Endothelial cell of umbilical vein (primary cell): ENCODE measurements at regions of chr22 and their contacts with region 1.

Region 1: GRCh38 chr22:41800348-41801146 is at the start of gene CCDC134:
- DNase-seq: peak; percentile 84
- H3K4me3 ChIP-seq: peak within 1 kb of the TSS; percentile 62 to 83 (median 78)
- H3K27ac ChIP-seq: peak within 1 kb of the TSS; percentile 21
- H3K4me1 ChIP-seq: peaks cover 16% of the 10 kb centered on the region
- H3K27me3 ChIP-seq: no peaks in the 10 kb centered on the region
- CTCF ChIP-seq: no peak
- POLR2A ChIP-seq: peak; percentile 93
- total RNA-seq, gene CCDC134: 8.1 and 8.4 TPM in 2 replicates

Region 2: DNA sequence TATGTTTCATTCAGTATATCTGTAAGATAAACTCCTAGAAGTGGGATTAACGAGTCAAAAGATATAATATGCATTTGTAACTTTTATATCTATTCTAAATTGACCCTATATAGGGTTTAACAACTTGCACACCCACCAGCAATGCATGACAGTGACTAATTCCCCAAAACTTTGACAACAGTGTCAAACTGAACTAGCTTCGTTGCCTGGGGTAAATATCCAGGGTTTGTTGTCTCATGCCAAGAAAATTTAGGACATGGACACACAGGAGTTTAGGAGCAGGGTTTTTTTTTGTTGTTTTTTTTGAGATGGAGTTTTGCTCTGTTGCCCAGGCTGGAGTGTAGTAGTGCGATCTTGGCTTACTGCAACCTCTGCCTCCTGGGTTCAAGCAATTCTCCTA is 116.9 kb before region 1 on chr22:
- CTCF ChIA-PET with region 1: no interaction called
- POLR2A ChIA-PET with region 1: no interaction called
- dilution Hi-C with region 1: no loop called
- intact Hi-C with region 1: no loop called
- DNase-seq: no peak
- H3K4me3 ChIP-seq: no peak overlapping the region
- H3K27ac ChIP-seq: no peak overlapping the region
- H3K4me1 ChIP-seq: peaks cover 13% of the 10 kb centered on the region
- H3K27me3 ChIP-seq: no peaks in the 10 kb centered on the region
- CTCF ChIP-seq: no peak
- POLR2A ChIP-seq: no peak

Region 3: DNA sequence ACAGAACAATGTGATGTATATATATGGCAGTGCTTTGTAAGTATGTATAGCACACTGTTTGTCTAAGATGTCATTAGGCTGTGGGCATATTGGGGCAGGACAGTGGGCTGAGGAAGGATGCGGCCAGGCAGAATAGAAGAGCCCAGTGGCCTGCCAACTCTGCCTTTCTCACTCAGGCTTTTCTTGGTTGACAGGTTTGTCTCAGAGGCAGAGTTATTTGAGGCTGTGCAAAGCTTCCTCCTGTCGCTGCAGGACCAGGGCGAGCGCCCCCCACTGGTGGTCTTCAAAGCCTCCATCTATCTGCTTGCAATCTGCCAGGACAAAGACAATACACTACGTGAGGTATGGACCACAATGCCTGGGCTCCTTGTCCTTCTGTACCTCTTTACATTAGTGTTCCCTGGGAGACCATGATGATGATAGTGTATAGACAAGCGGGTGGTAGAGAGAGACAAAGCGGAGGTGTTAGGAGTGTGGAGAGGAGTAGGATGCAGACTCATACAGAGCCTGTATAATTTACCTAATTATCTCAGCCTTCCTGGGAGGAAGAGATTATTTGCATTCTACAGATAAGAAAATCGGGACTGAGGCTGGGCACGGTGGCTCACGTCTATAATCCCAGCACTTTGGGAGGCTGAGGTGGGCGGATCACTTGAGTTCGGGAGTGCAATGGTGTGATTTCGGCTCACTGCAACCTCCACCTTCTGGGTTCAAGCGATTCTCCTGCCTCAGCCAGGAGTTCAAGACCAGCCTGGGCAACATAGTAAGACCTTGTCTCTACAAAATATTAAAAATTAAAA is 37.4 kb before region 1 on chr22:
- CTCF ChIA-PET with region 1: interaction called, 12 read pairs
- POLR2A ChIA-PET with region 1: no interaction called
- dilution Hi-C with region 1: no loop called
- intact Hi-C with region 1: no loop called
- DNase-seq: peak; percentile 16
- H3K4me3 ChIP-seq: no peak overlapping the region
- H3K27ac ChIP-seq: no peak overlapping the region
- H3K4me1 ChIP-seq: peaks cover under 1% of the 10 kb centered on the region
- H3K27me3 ChIP-seq: peaks cover 0 to 3% of the 10 kb centered on the region in 2 experiments
- CTCF ChIP-seq: peak; percentile 31 to 49
- POLR2A ChIP-seq: no peak

Region 4: DNA sequence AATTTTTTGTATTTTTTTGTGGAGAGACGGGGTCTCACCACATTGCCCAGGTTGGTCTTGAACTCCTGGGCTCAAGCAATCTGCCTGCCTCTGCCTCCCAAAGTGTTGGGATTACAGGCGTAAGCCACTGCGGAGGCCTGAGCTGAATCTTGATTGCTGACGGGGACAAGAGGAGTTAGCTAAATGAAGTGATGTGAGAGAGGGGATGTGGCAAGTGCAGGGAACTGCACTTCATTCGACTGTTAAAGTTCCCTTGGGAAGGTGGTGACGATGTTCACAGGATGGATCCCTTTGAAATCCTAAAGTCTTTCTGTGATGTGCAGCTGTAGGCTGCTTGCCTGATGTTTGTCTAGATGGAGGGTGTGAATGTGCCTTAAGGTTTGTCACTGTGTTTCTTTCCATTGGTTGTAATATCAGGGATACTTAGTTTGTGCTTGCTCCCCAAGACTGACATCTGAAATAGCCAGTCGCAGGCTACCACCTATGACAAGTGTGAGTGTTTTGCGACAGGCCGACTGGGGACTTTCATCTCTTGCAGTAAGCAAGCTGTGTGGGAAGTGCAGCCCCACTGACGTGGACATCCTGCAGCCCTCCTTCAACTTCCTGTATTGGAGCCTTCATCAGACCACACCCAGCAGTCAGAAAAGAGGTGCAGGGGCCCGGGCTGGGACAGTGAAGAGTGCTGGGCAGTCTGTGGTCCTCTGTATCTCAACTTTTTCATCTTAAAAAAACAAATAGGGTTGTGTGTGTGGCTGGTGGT is 19.6 kb before region 1 on chr22:
- CTCF ChIA-PET with region 1: interaction called, 6 read pairs
- POLR2A ChIA-PET with region 1: interaction called, 4 read pairs
- dilution Hi-C with region 1: no loop called
- intact Hi-C with region 1: loop called (anchors 1 kb)
- DNase-seq: peak; percentile 49
- H3K4me3 ChIP-seq: no peak overlapping the region
- H3K27ac ChIP-seq: no peak overlapping the region
- H3K4me1 ChIP-seq: peaks cover 10% of the 10 kb centered on the region
- H3K27me3 ChIP-seq: no peaks in the 10 kb centered on the region
- CTCF ChIP-seq: no peak
- POLR2A ChIP-seq: no peak

Region 5: GRCh38 chr22:41786418-41786817 is 14.1 kb before region 1 on chr22:
- CTCF ChIA-PET with region 1: interaction called, 11 read pairs
- POLR2A ChIA-PET with region 1: interaction called, 4 read pairs
- dilution Hi-C with region 1: no loop called
- intact Hi-C with region 1: loop called (anchors 1 kb)
- DNase-seq: no peak
- H3K4me3 ChIP-seq: no peak overlapping the region
- H3K27ac ChIP-seq: no peak overlapping the region
- H3K4me1 ChIP-seq: peaks cover 2% of the 10 kb centered on the region
- H3K27me3 ChIP-seq: no peaks in the 10 kb centered on the region
- CTCF ChIP-seq: no peak
- POLR2A ChIP-seq: no peak

Region 6: DNA sequence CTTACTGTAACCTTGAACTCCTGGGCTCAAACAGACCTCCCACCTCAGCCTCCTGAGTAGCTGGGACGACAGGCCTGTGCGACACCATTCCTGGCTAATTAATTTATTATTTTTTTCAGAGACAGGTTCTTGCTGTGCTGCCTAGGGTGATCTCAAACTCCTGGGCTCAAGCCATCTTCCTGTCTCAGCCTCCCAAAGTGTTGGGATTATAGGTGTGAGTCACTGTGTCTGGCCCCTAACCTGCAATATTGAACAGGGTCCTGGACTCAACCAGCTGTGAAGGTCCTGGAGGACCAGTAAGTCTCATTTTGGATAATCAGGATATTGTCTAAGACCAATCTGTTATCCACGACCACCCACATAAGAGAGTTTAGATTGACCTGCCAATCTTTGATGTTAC is 15.2 kb after region 1 on chr22:
- CTCF ChIA-PET with region 1: no interaction called
- POLR2A ChIA-PET with region 1: no interaction called
- dilution Hi-C with region 1: no loop called
- intact Hi-C with region 1: no loop called
- DNase-seq: no peak
- H3K4me3 ChIP-seq: no peak overlapping the region
- H3K27ac ChIP-seq: no peak overlapping the region
- H3K4me1 ChIP-seq: no peaks in the 10 kb centered on the region
- H3K27me3 ChIP-seq: no peaks in the 10 kb centered on the region
- CTCF ChIP-seq: no peak
- POLR2A ChIP-seq: no peak

Region 7: GRCh38 chr22:41832553-41833368 is 32.2 kb after region 1 on chr22 and contains the start of gene SREBF2:
- CTCF ChIA-PET with region 1: interaction called, 8 read pairs
- POLR2A ChIA-PET with region 1: interaction called, 3 read pairs
- dilution Hi-C with region 1: no loop called
- intact Hi-C with region 1: loop called (anchors 2 kb)
- DNase-seq: peak; percentile 100
- H3K4me3 ChIP-seq: peak within 1 kb of the TSS; percentile 59 to 81 (median 75)
- H3K27ac ChIP-seq: peak within 1 kb of the TSS; percentile 73
- H3K4me1 ChIP-seq: peaks cover 16% of the 10 kb centered on the region
- H3K27me3 ChIP-seq: no peaks in the 10 kb centered on the region
- CTCF ChIP-seq: no peak
- POLR2A ChIP-seq: peak; percentile 68
- total RNA-seq, gene SREBF2: 136 and 144 TPM in 2 replicates